Heart right ventricle (tissue), 16 donors: ENCODE measurements at regions of chr12 and their contacts with region 1.

Region 1: DNA sequence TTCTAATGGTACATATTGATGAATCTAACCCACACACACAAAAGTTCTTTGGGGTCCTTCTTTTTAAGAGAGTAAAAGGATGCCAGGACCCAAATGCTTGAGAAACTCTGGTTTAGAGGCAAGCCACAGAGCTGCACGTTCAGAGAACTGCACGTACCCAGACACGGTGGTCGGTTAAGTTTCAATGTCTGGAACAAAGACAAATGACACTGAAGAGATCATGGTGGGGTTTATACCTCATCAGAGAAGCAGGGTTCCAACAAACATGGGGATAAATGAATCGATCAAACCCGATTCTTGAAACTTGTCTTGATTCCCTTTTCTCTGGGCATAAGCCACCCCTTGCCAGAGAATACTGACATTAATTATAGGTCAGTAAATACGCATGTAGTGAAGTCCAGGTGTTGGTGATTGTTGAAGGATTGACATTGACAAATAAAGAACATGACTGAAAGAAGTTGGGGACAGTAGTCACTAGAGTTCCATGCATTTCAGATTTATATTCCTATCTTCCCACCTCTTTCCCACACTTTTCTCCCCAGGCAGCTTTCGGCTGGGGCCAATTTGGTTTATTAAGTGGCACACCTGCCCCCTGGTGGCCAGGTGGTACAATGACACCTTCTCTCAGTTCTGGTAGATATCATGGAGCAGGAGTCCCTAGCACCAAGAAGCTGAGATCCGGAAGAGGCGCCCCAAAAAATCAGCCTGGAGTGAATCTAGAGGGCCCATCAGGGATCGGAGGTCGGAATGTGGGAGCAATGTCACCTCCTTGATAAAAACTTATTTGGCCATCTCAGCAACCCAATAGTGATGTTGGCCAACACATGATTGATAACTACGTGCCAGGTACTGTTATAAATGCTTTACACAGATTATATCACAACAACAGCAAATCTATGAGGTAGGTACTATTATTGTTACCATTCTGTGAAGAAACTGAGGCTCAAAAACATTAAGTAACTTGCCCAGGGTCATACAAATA is 17.8 kb upstream of the HDAC7 start:
- DNase-seq: peak; percentile 68 to 75
- ATAC-seq: peak; percentile 58 to 89 (median 80)
- H3K4me3 ChIP-seq: no peak overlapping the region
- H3K27ac ChIP-seq: peak overlapping the region in 1 of 10 donors; percentile 17
- H3K4me1 ChIP-seq: peaks cover 3 to 26% (median 11%) of the 10 kb centered on the region in 9 donors
- H3K27me3 ChIP-seq: no peaks in the 10 kb centered on the region
- CTCF ChIP-seq: peak; percentile 86 to 97 (median 91)

Region 2: DNA sequence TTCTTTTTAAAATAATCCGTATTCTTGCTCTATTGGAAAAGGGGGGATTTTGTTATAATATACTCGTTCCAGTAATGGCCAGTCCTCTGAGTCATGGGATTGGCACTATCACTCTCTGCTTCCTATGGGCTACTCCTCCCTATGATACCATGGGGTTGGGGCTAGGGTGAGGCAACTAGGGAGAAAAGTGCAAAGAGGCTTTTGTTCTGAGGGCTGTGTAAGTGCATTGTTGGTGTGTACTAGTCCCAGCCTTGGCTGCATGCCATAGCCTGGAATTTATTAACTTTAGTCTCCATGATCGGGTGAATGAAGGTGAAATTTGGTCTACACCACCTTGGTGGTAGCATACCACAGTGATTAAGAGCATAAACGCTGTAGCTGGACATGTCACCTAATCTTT is 379.2 kb before region 1 on chr12:
- intact Hi-C with region 1: no loop called
- DNase-seq: no peak
- ATAC-seq: no peak
- H3K4me3 ChIP-seq: no peak overlapping the region
- H3K27ac ChIP-seq: no peak overlapping the region
- H3K4me1 ChIP-seq: no peaks in the 10 kb centered on the region
- H3K27me3 ChIP-seq: peaks cover 0 to 17% (median 0%) of the 10 kb centered on the region in 7 donors
- CTCF ChIP-seq: no peak

Region 3: GRCh38 chr12:47651368-47652254 is 185.9 kb before region 1 on chr12:
- intact Hi-C with region 1: loop called in 3 of 10 experiments (anchors 1 to 5 kb)
- DNase-seq: peak; percentile 23 to 34
- ATAC-seq: peak; percentile 83 to 91 (median 88)
- H3K4me3 ChIP-seq: peak overlapping the region in 4 of 10 donors; percentile 9 to 19 (median 12)
- H3K27ac ChIP-seq: peak overlapping the region in 1 of 10 donors; percentile 26
- H3K4me1 ChIP-seq: peaks cover 0 to 23% (median 13%) of the 10 kb centered on the region in 9 donors
- H3K27me3 ChIP-seq: no peaks in the 10 kb centered on the region
- CTCF ChIP-seq: peak; percentile 56 to 83 (median 74)

Region 4: GRCh38 chr12:47773062-47773857 is 64.2 kb before region 1 on chr12 and contains the start of gene SLC48A1:
- intact Hi-C with region 1: loop called in 7 of 10 experiments (anchors 2 to 10 kb)
- DNase-seq: peak; percentile 60 to 83
- ATAC-seq: peak; percentile 60 to 93 (median 78)
- H3K4me3 ChIP-seq: peak within 1 kb of the TSS; percentile 63 to 99 (median 95)
- H3K27ac ChIP-seq: peak within 1 kb of the TSS; percentile 73 to 90 (median 82)
- H3K4me1 ChIP-seq: peaks cover 24 to 64% (median 57%) of the 10 kb centered on the region in 9 donors
- H3K27me3 ChIP-seq: no peaks in the 10 kb centered on the region
- CTCF ChIP-seq: peak; percentile 20 to 65 (median 38)
- total RNA-seq, gene SLC48A1: 18.6 to 31.9 (median 22.1) TPM

Region 5: DNA sequence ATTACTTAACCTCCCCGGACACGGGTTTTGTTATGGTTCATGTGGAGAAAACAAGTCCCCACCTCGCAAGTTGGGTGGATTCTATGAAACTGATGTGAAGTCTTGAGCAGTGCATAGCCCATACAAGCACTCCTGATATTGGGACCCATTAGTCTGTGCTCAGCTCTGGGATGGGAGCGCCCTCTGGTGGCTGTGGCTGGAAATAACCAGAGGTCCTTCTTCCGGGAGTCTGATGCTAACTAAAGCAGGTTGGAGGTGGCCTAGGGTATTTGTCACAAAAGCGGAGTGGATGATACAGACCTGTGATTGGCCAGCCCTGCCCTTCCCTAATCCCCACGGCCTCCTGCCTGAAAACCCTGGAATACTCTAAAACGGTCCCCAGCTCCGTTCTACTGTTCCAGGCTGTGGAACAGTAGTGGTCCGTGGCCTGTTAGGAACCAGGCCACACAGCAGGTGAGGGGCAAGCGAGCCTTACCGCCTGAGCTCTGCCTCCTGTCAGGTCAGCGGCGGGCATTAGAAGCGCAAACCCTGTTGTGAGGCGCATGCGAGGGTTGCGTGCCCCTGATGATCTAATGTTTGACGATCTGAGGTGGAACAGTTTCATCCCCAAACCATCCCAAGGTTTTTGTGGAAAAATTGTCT is 58.1 kb before region 1 on chr12:
- intact Hi-C with region 1: loop called in 8 of 10 experiments (anchors 2 to 10 kb)
- DNase-seq: peak; percentile 88 to 91
- ATAC-seq: peak; percentile 68 to 84 (median 76)
- H3K4me3 ChIP-seq: no peak overlapping the region
- H3K27ac ChIP-seq: peak overlapping the region in 2 of 10 donors; percentile 39 to 52
- H3K4me1 ChIP-seq: peaks cover 22 to 71% (median 52%) of the 10 kb centered on the region in 9 donors
- H3K27me3 ChIP-seq: no peaks in the 10 kb centered on the region
- CTCF ChIP-seq: peak; percentile 90 to 97 (median 95)

Region 6: GRCh38 chr12:47797441-47797840 is 40.0 kb before region 1 on chr12:
- intact Hi-C with region 1: loop called (anchors 1 to 5 kb)
- DNase-seq: no peak
- ATAC-seq: peak in 4 of 8 donors; percentile 18 to 31 (median 27)
- H3K4me3 ChIP-seq: no peak overlapping the region
- H3K27ac ChIP-seq: no peak overlapping the region
- H3K4me1 ChIP-seq: peaks cover 35 to 51% (median 42%) of the 10 kb centered on the region in 9 donors
- H3K27me3 ChIP-seq: no peaks in the 10 kb centered on the region
- CTCF ChIP-seq: peak in 7 of 9 donors; percentile 31 to 58 (median 44)

Region 7: DNA sequence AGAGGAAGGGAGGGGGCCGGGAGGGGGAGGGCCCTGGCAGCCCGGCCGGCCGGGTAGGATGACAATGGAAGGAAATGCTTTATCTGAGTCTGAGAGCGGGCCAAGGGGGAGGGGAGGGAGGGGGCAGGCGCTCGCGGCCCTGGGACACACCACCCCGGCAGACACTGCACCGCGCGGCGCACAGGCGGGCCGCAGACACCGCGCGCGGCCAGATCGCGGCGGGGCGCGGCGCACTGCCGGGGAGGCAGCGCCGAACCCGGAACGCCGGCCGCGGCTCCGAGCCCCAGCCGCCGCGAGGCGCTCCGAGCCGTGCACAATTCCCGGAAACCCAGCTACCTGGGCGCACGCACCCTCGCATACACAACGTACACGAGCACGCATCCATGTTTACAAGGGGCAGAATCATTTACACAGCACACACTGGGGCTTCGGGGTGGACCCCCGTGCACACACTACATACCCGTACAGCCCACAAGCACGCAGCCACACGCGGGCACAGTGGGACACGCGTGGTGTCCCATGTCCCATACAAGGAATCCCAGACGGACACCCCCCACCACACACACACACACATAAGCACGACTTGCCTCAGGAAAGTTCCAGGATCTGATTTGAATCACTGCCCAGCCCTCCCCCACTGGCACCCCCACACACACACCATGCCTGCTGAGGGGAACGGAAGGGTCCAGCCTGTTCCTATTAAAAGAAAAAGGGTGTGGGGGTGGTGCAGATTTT is 17.4 kb before region 1 on chr12 and contains the start of gene HDAC7:
- intact Hi-C with region 1: loop called in 1 of 10 experiments (anchors 2 kb)
- DNase-seq: peak; percentile 92 to 93
- ATAC-seq: peak; percentile 51 to 81 (median 72)
- H3K4me3 ChIP-seq: peak within 1 kb of the TSS; percentile 61 to 91 (median 83)
- H3K27ac ChIP-seq: peak within 1 kb of the TSS; percentile 94 to 100 (median 99)
- H3K4me1 ChIP-seq: peaks cover 28 to 90% (median 84%) of the 10 kb centered on the region in 9 donors
- H3K27me3 ChIP-seq: no peaks in the 10 kb centered on the region
- CTCF ChIP-seq: peak in 1 of 9 donors; percentile 9
- total RNA-seq, gene HDAC7: 26.9 to 50.7 (median 38.5) TPM